ENCODE measurements at regions of chr4 and their contacts with region 1.

Region 1: DNA sequence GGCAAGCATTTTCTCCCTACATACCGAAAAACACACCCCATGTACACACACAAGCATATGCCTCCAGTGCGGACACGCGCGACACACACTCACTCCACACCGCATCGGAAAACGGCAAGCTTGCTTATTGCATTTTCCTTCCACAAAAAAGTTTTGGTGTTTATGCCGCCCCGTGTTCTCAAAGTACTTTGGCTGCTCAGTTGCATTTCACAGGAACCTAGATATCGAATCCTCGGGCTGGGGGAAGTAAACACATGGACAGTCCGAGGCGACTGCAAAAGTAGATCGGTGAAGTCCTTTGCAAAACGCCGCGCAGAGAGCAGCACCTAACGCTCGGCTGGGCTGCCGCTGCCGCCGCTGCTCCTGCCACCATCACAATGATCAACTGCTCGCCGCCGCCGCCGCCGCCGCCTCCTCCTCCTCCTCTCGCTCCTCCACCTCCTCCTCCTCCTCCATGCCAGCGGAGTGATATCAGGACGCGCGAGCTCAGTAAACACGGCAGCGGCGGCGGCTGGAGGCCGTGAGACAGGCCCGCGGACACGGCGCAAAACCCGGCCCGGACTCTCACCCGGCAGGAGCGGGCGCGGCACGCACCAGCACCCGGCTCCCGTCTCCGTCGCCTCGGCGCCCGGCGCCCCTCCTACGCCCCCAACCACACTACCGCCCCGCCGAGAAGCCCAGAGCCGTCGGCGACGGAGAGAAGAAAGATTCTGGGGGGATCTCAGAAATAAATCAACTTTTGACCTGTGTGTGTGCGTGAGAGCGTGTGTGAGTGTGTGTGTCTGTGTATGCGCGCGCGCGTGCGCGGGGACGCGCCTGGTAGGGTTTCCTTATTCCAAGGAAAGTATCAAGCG is at the start of gene MAML3:
- DNase-seq: peak; percentile 96 to 98 (median 96)
- H3K4me3 ChIP-seq: peak within 1 kb of the TSS; percentile 63 to 100 (median 98)
- H3K27ac ChIP-seq: peak within 1 kb of the TSS; percentile 81 to 91
- H3K4me1 ChIP-seq: peaks cover 28 to 61% (median 54%) of the 10 kb centered on the region in 4 experiments
- H3K27me3 ChIP-seq: no peaks in the 10 kb centered on the region

Region 2: DNA sequence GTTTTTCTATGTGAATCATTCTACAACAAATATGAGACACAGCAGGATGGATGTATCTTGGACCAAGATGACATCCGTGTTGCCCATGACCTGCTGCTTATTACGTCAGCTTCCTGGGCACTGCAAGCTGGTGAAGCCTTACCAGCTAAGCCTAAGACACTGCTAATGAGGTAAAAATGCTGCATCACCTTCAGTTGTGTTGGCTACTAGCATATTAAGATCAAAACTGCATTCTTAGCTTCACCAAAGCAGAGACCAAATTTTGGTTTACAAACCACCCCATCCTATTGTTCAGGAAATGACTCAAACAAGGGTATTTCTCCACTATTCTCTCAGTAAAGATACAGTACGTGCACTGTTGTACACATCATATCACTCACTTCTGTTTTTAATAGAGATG is 50.3 kb before region 1 on chr4:
- CTCF ChIA-PET with region 1: interaction called, 11 read pairs
- POLR2A ChIA-PET with region 1: interaction called, 15 read pairs
- DNase-seq: peak; percentile 88 to 98 (median 97)
- H3K4me3 ChIP-seq: no peak overlapping the region
- H3K27ac ChIP-seq: peak overlapping the region; percentile 47 to 76
- H3K4me1 ChIP-seq: peaks cover 32 to 67% (median 53%) of the 10 kb centered on the region in 4 experiments
- H3K27me3 ChIP-seq: no peaks in the 10 kb centered on the region

Region 3: GRCh38 chr4:140170299-140170698 is 16.4 kb after region 1 on chr4:
- CTCF ChIA-PET with region 1: no interaction called
- POLR2A ChIA-PET with region 1: no interaction called
- DNase-seq: no peak
- H3K4me3 ChIP-seq: no peak overlapping the region
- H3K27ac ChIP-seq: no peak overlapping the region
- H3K4me1 ChIP-seq: no peaks in the 10 kb centered on the region
- H3K27me3 ChIP-seq: no peaks in the 10 kb centered on the region

Region 4: GRCh38 chr4:140189805-140190204 is 35.9 kb after region 1 on chr4:
- CTCF ChIA-PET with region 1: no interaction called
- POLR2A ChIA-PET with region 1: no interaction called
- DNase-seq: no peak
- H3K4me3 ChIP-seq: no peak overlapping the region
- H3K27ac ChIP-seq: no peak overlapping the region
- H3K4me1 ChIP-seq: no peaks in the 10 kb centered on the region
- H3K27me3 ChIP-seq: no peaks in the 10 kb centered on the region

Region 5: GRCh38 chr4:140252742-140253555 is 99.0 kb after region 1 on chr4:
- CTCF ChIA-PET with region 1: interaction called, 53 read pairs
- POLR2A ChIA-PET with region 1: interaction called, 10 read pairs
- DNase-seq: peak; percentile 63 to 77 (median 76)
- H3K4me3 ChIP-seq: peak overlapping the region; percentile 41 to 80 (median 68)
- H3K27ac ChIP-seq: peak overlapping the region; percentile 27 to 74
- H3K4me1 ChIP-seq: peaks cover 8 to 35% (median 22%) of the 10 kb centered on the region in 4 experiments
- H3K27me3 ChIP-seq: no peaks in the 10 kb centered on the region